CD8-positive, alpha-beta T cell (primary cell): ENCODE measurements at regions of chr2 and their contacts with region 1.

Region 1: DNA sequence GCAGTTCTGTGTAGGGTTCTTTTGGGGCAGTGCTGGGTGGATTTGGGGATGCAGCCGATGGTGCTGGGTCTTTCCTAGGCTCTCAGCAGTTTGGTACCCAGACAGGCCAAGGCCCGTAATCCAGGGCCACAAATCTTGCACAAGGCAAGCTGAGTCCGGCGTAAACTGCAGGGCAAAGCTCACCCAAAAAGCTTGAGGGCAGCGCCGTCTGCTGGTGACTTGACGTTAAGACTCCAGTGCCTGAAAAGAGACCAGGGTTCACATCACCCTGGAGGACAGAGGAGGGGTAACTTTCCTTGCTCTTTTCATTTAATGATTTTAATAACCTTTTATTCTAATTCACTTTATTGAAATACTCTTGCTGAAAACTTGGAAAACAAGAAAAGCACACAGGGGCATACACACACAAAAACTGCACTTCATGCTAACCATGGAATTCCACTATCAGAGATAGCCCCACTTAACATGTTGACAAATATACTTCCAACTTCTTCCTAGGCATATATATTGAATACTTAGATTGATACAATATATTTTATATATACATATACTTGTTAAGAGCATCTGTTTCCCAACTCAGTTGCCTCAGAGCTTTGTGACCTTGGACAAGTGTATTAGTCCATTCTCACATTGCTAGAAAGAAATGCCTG is 38.9 kb downstream of the CNGA3 start:
- DNase-seq: peak; percentile 50 to 78 (median 70)
- ATAC-seq: peak; percentile 78
- H3K4me3 ChIP-seq: no peak overlapping the region
- H3K4me3 Mint-ChIP-seq: no peak overlapping the region
- H3K27ac ChIP-seq: no peak overlapping the region
- H3K27ac Mint-ChIP-seq: no peak overlapping the region
- H3K4me1 ChIP-seq: no peaks in the 10 kb centered on the region
- H3K4me1 Mint-ChIP-seq: no peaks in the 10 kb centered on the region
- H3K27me3 ChIP-seq: no peaks in the 10 kb centered on the region
- H3K27me3 Mint-ChIP-seq: peaks cover 6% of the 10 kb centered on the region
- CTCF ChIP-seq: peak; percentile 88

Region 2: GRCh38 chr2:97812931-97813330 is 572.2 kb before region 1 on chr2:
- CTCF ChIA-PET with region 1: interaction called, 14 read pairs
- POLR2A ChIA-PET with region 1: no interaction called
- intact Hi-C with region 1: no loop called
- DNase-seq: no peak
- ATAC-seq: no peak
- H3K4me3 ChIP-seq: no peak overlapping the region
- H3K4me3 Mint-ChIP-seq: no peak overlapping the region
- H3K27ac ChIP-seq: no peak overlapping the region
- H3K27ac Mint-ChIP-seq: no peak overlapping the region
- H3K4me1 ChIP-seq: no peaks in the 10 kb centered on the region
- H3K4me1 Mint-ChIP-seq: no peaks in the 10 kb centered on the region
- H3K27me3 ChIP-seq: no peaks in the 10 kb centered on the region
- H3K27me3 Mint-ChIP-seq: no peaks in the 10 kb centered on the region
- CTCF ChIP-seq: no peak

Region 3: DNA sequence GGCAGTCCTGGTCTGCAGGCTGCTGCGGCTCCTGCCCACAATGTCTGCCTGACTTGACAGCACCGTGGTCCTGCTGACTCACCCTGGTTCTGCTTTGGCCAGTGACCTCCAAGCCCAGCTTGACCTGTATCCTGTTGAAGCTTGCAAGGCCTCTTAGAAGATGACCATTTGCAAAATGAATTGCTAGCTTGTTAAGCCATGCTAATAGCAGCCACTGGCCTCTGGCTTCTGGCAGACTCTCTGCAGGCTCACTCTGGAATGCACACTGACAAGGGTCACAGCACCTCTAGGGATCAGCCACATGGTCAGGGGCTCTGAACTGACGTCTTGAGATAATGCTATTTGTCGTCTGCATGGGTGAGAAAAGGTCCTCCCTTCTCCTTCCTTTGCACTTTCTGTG is 13.1 kb before region 1 on chr2:
- CTCF ChIA-PET with region 1: interaction called, 10 read pairs
- POLR2A ChIA-PET with region 1: interaction called, 3 read pairs
- intact Hi-C with region 1: no loop called
- DNase-seq: no peak
- ATAC-seq: no peak
- H3K4me3 ChIP-seq: no peak overlapping the region
- H3K4me3 Mint-ChIP-seq: no peak overlapping the region
- H3K27ac ChIP-seq: no peak overlapping the region
- H3K27ac Mint-ChIP-seq: no peak overlapping the region
- H3K4me1 ChIP-seq: no peaks in the 10 kb centered on the region
- H3K4me1 Mint-ChIP-seq: no peaks in the 10 kb centered on the region
- H3K27me3 ChIP-seq: peaks cover 0 to 5% of the 10 kb centered on the region in 2 experiments
- H3K27me3 Mint-ChIP-seq: peaks cover 24% of the 10 kb centered on the region
- CTCF ChIP-seq: no peak